Astrocyte of the cerebellum (primary cell): ENCODE measurements at regions of chr20 and their contacts with region 1.

Region 1: GRCh38 chr20:38645980-38646858 is 44.6 kb downstream of the ARHGAP40 start:
- DNase-seq: peak; percentile 16
- H3K4me3 ChIP-seq: no peak overlapping the region
- CTCF ChIP-seq: peak; percentile 90

Region 2: GRCh38 chr20:38604861-38605303 is 41.3 kb before region 1 on chr20:
- in situ Hi-C with region 1: no loop called
- DNase-seq: no peak
- H3K4me3 ChIP-seq: no peak overlapping the region
- CTCF ChIP-seq: no peak

Region 3: GRCh38 chr20:38751360-38751976 is 105.2 kb after region 1 on chr20:
- in situ Hi-C with region 1: loop called (anchors 10 kb)
- DNase-seq: peak; percentile 37
- H3K4me3 ChIP-seq: no peak overlapping the region
- CTCF ChIP-seq: peak; percentile 61